Activated CD4-positive, alpha-beta memory T cell treated with anti-CD3 and anti-CD28 coated beads, Interleukin-2, amount 10 ng/mL, durations not matched to agents 7 days and 5 days (primary cell): ENCODE measurements at regions of chr15 and their contacts with region 1.

Region 1: GRCh38 chr15:56869573-56869972 is 48.9 kb upstream of the TCF12 start:
- DNase-seq: peak; percentile 46
- H3K4me3 Mint-ChIP-seq: no peak overlapping the region
- H3K27ac Mint-ChIP-seq: no peak overlapping the region
- H3K4me1 Mint-ChIP-seq: no peaks in the 10 kb centered on the region
- H3K27me3 Mint-ChIP-seq: no peaks in the 10 kb centered on the region

Region 2: DNA sequence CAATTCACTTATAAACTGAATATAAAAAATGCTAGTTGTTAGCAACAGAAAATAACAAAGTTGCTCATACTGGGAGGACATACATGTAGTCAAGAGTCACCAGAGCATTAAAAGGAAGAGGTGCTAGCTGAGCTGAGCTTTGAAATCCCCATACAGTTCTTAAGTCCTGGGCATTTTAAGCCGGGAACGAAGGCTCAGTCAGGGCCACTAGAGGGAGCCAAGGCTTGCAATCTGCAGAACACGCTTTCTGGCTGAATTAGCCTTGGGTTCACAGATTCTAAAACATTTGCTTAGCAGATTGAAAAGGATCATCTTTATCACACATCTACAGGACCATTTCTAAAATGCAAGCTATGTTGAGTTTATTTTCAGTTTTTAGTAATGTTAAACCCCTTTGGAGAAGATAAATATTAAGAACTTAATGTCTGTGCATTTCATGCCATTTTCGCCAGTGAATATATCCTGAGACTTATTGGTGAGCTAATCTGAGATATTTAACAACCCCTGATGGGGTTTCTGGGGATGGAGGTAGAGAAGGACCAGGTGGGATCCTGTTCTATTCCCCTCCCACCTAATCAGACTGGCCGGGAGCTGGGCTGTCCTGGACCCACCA is 378.4 kb before region 1 on chr15:
- CTCF ChIA-PET with region 1: interaction called, 74 read pairs
- POLR2A ChIA-PET with region 1: no interaction called
- DNase-seq: peak; percentile 62
- H3K4me3 Mint-ChIP-seq: no peak overlapping the region
- H3K27ac Mint-ChIP-seq: no peak overlapping the region
- H3K4me1 Mint-ChIP-seq: peaks cover 7% of the 10 kb centered on the region
- H3K27me3 Mint-ChIP-seq: peaks cover 3% of the 10 kb centered on the region